Dendritic cell treated with granulocyte-macrophage colony-stimulating factor and Interleukin-4, amounts not matched to agents 40 ng/mL and 50 ng/mL, for 4 days (primary cell): ENCODE measurements at regions of chr13 and their contacts with region 1.

Region 1: DNA sequence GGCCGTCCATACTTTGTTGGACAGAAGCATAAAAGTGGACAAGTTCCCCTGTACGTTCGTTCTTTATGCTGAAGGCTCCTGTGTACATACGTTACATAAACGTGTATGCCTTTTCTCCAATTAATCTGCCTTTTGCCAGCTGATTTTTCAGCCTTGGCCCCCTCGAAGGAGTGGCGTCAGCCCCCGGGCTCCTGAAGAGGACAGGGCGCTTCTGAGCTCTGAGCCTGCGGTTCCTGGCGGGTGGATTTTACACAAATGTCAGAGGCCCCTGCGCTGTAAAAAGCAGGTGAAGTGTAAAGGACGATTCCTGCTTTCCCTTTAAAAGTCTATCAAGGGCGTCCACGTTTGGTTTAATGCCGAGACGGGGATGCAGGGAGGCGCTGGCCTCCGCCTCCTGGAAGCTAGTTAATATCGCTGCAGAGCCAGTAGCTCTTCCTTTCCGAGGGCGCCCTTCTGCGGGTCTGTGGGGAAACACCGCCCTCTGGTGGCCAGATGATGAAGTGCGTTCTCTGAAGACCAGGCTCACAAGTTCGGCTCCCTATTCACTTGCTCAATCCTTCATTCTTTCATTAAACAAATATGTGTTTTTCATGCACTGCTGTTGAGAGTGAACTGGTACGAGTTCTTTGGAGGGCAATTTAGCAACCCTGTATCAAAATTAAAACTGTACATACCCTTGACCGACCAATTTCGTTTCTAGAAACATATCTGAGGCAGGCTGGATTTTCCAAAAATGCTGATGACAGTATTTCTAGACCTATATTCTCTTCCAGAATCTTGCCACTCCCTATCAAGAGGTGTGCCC is 62.0 kb downstream of the GPR12 start:
- H3K4me3 Mint-ChIP-seq: no peak overlapping the region
- H3K27ac Mint-ChIP-seq: no peak overlapping the region
- H3K4me1 Mint-ChIP-seq: no peaks in the 10 kb centered on the region
- H3K27me3 Mint-ChIP-seq: peaks cover 10% of the 10 kb centered on the region

Region 2: DNA sequence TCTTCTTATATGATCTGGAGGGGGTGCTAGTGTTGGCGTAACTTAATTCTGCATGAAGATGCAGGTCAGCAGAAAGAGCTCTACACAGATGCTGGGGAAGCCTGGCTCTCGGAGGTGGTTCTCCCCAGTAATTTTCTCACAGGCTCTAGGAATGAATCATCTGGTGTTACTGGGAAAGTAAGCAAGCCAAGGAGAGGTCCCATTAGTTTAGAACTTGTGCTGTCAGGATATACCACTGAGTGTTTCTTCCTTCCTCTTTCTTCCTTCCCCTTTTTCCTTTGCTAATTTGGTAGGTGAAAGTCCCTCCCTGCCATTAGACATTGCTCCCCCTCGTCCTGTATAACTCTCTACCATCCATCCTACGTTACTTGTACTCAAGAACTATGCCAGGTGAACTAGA is 1258.5 kb before region 1 on chr13:
- intact Hi-C with region 1: no loop called
- H3K4me3 Mint-ChIP-seq: no peak overlapping the region
- H3K27ac Mint-ChIP-seq: no peak overlapping the region
- H3K4me1 Mint-ChIP-seq: peaks cover 8% of the 10 kb centered on the region
- H3K27me3 Mint-ChIP-seq: peaks cover 6% of the 10 kb centered on the region

Region 3: GRCh38 chr13:26482451-26483197 is 216.0 kb before region 1 on chr13:
- intact Hi-C with region 1: loop called (anchors 1 kb)
- H3K4me3 Mint-ChIP-seq: no peak overlapping the region
- H3K27ac Mint-ChIP-seq: no peak overlapping the region
- H3K4me1 Mint-ChIP-seq: no peaks in the 10 kb centered on the region
- H3K27me3 Mint-ChIP-seq: no peaks in the 10 kb centered on the region

Region 4: GRCh38 chr13:26786651-26787295 is 88.2 kb after region 1 on chr13:
- intact Hi-C with region 1: no loop called
- H3K4me3 Mint-ChIP-seq: no peak overlapping the region
- H3K27ac Mint-ChIP-seq: no peak overlapping the region
- H3K4me1 Mint-ChIP-seq: peaks cover 10% of the 10 kb centered on the region
- H3K27me3 Mint-ChIP-seq: peaks cover 15% of the 10 kb centered on the region